Activated CD4-positive, alpha-beta T cell treated with anti-CD3 and anti-CD28 coated beads for 36 hours (primary cell): ENCODE measurements at regions of chr2 and their contacts with region 1.

Region 1: DNA sequence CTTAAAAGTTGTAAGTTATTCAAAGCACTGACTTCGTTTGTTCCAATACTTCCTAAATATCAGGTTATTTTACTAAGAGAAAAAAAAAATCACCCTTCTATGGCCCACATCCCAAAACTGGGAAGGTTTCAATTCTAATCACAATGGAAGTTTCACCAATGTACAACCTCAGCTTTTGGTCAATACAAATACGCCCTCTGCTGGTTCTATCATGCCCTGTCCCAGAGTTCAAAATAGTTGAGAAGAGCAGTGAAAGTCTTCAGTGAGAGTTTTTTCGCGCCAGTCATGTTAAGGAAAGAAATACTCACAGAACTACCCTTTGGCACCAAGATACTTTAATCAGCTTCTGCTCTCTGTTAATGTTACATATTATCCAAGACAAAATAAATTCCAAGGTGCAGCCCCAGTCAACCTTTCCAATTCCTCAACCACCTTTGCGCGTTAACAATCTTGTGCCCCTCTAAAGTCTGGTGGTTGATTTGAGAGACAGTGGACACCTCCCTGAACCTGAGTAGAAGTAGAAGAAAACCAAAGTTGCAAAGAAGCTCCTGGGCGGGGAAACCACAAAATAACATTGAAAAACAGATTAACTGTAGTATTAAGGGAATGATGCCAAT is 59.9 kb downstream of the SUMO1 start:
- DNase-seq: peak; percentile 71
- ATAC-seq: peak; percentile 84
- H3K4me3 Mint-ChIP-seq: no peak overlapping the region
- H3K27ac Mint-ChIP-seq: no peak overlapping the region
- H3K4me1 Mint-ChIP-seq: peaks cover 2% of the 10 kb centered on the region
- H3K27me3 Mint-ChIP-seq: peaks cover 3% of the 10 kb centered on the region

Region 2: DNA sequence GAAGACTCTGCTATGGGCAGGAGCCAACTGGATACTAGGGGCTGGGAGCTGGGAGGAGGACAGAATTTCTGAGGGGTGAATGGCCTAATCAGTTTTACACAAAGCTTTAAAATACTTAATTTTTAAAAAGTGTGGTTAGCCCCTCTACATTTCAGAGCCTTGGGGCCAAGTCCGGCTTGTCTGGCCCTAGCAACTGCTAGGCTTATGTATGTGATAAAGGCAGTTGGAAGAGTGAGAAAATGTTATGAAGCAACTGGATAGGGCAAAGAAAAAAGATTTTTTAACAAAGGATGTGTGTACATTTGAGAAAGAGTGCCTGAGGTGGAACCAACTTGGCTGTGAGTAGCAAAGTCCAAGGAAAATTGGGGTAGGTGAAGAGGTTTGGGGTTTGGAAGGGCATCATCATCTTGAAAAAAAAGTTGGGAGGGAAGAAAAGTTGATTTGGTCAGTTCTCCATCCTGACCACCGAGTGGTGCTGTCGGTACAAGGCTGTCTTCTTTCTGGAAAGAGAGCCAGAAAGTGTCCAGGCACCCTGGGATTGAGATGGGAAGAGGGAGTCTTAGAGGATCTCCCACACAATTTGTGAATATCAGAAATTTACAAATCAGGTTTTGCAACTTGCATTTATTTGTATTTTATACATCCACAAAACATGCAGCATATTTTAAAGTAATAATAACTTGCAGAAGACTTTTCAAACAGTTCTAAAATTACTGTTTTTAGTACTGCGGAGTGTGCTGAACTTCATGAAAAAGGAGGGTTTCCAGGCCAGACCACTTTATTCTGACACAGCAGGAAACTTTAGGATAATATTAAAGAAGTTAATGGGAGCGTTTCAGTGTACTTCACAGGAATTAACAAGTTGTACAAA is 382.6 kb before region 1 on chr2:
- CTCF ChIA-PET with region 1: no interaction called
- POLR2A ChIA-PET with region 1: no interaction called
- intact Hi-C with region 1: loop called (anchors 2 to 5 kb)
- DNase-seq: peak; percentile 19
- ATAC-seq: no peak
- H3K4me3 Mint-ChIP-seq: no peak overlapping the region
- H3K27ac Mint-ChIP-seq: no peak overlapping the region
- H3K4me1 Mint-ChIP-seq: no peaks in the 10 kb centered on the region
- H3K27me3 Mint-ChIP-seq: peaks cover 2% of the 10 kb centered on the region

Region 3: GRCh38 chr2:201860636-201861066 is 317.8 kb before region 1 on chr2:
- CTCF ChIA-PET with region 1: interaction called, 45 read pairs
- POLR2A ChIA-PET with region 1: no interaction called
- intact Hi-C with region 1: loop called (anchors 1 kb)
- DNase-seq: peak; percentile 57
- ATAC-seq: peak; percentile 82
- H3K4me3 Mint-ChIP-seq: no peak overlapping the region
- H3K27ac Mint-ChIP-seq: no peak overlapping the region
- H3K4me1 Mint-ChIP-seq: peaks cover 16% of the 10 kb centered on the region
- H3K27me3 Mint-ChIP-seq: peaks cover 15% of the 10 kb centered on the region

Region 4: DNA sequence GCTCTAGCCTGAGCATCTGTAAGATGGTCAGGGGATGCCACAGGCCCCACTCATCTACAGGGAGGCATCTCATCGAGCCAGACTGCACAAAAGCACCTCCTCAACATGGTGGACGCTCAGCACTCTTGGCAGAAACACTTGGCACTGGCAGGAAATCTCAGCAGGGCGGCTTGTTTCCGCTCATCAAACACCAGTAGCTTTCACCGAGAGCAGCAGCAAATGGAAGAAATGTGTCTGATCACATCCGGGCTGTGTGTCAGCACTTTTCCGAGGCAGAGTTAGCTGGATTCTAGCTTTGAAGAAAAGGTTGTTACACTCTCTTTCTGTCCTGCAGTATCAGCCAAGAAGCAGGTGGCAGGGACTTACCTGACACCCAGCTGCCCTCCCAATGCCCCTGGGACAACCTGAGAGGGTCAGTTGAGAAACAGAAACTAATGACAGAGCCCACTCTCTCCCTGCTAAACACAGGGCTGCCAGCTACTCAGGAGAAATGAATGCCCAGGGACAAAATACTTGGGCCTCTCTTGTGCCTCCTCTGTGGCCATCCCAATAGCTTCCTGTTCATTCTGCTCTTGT is 213.7 kb before region 1 on chr2:
- CTCF ChIA-PET with region 1: interaction called, 3 read pairs
- POLR2A ChIA-PET with region 1: no interaction called
- intact Hi-C with region 1: loop called in 1 of 2 experiments (anchors 1 kb)
- DNase-seq: peak; percentile 51
- ATAC-seq: peak; percentile 85
- H3K4me3 Mint-ChIP-seq: no peak overlapping the region
- H3K27ac Mint-ChIP-seq: peak overlapping the region; percentile 79
- H3K4me1 Mint-ChIP-seq: no peaks in the 10 kb centered on the region
- H3K27me3 Mint-ChIP-seq: no peaks in the 10 kb centered on the region

Region 5: DNA sequence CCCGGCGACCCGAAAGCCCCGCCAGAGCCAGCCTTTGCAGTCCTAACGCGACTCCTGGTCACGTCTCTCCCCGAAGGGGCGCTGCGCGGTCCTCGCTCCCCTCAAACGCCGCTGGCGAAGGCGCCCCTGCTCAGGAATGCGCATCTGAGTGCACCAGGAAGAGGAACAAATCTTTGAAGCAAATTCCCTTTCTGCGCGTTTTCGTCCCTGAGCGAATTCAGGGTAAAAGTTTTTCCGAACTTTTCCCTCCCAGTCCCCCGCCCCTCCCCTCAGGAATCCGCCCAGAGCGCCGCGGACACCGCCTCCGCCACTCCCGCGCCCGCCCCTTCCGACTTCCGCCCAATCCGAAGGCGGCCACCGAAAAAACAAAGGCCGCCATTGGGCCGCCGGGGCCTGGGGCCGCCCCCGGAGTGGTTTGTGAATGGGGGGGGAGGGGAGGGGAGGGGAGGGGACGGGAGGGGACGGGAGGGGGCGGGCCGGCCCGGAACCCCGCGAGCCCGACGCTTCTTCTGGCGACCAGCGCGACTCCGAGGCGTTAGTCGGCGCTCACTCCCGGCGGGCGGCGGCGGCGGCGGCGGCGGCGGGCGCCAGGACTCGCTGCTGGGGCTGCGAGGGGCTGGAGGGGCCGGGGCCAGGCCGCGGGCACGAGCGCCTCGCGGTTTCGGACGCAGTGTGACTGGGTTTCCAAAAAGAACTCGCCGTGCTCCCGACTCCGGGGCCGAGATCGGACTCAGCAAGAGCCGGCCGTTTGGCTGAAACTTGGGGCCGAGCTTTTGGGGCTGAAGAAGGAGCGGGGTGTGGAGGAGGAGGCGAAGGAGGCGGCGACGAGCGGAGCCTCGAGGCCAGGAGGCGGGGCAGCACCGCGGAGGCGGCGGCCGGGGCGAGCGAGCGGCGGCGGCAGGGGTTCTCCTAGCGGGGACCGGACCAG is 144.9 kb before region 1 on chr2 and contains the start of gene FZD7:
- CTCF ChIA-PET with region 1: no interaction called
- POLR2A ChIA-PET with region 1: no interaction called
- intact Hi-C with region 1: loop called (anchors 1 to 2 kb)
- DNase-seq: peak; percentile 91
- ATAC-seq: peak; percentile 83
- H3K4me3 Mint-ChIP-seq: peak within 1 kb of the TSS; percentile 72
- H3K27ac Mint-ChIP-seq: peak within 1 kb of the TSS; percentile 22
- H3K4me1 Mint-ChIP-seq: peaks cover 13% of the 10 kb centered on the region
- H3K27me3 Mint-ChIP-seq: peaks cover 21% of the 10 kb centered on the region
- total RNA-seq, gene FZD7: 0.58 to 0.94 TPM

Region 6: DNA sequence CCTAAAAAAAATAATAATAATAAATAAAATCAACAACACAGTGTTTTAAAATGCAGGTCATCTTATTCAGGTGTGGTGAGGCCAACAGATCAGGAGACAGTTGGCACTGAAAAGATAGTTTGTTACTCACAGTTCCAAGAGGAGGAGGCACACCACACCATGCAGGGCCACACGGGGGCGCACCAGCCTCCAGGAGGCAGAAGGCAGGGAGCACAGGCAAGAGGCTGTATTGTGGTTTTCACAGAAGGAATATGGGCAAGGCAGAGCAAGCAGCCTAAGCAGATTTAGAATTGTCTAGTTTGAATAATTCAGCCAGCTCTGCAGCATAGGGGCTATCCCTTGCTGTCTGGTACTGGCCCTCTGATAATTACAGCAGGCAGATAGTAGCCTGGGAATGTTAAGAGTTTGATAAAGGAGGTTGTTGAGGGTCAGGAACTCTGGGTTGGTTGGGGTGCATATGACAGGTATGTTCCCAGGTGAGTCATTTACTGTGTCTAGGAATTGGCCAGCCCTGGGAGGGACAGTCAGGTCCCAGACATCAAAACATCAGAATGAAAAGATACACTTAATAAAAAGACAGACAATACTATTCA is 74.1 kb before region 1 on chr2:
- CTCF ChIA-PET with region 1: interaction called, 9 read pairs
- POLR2A ChIA-PET with region 1: no interaction called
- intact Hi-C with region 1: loop called (anchors 1 kb)
- DNase-seq: peak; percentile 80
- ATAC-seq: peak; percentile 71
- H3K4me3 Mint-ChIP-seq: no peak overlapping the region
- H3K27ac Mint-ChIP-seq: no peak overlapping the region
- H3K4me1 Mint-ChIP-seq: no peaks in the 10 kb centered on the region
- H3K27me3 Mint-ChIP-seq: peaks cover 7% of the 10 kb centered on the region

Region 7: DNA sequence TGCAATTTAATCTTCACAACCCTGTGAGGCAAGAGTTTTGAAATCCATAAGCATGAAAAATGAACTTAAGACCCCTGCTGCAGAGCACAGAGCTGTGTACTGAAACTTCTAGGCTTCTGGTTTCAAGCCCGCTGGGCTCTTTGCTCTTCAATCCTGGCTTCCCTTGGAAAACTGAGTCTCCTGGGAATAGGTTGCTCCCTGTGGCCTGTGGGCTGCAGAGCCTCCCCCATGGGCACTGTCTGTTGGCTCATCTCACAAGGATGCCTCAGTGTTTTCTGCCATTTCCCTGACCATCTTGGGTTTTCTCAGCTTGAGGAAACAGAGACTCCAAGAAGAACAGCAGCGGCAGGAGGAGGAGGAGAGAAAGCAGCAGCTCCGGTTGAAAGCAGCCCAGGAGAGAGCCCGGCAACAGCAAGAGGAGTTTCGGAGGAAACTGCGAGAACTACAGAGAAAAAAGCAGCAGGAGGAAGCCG is 15.5 kb after region 1 on chr2:
- CTCF ChIA-PET with region 1: interaction called, 23 read pairs
- POLR2A ChIA-PET with region 1: no interaction called
- intact Hi-C with region 1: no loop called
- DNase-seq: no peak
- ATAC-seq: no peak
- H3K4me3 Mint-ChIP-seq: no peak overlapping the region
- H3K27ac Mint-ChIP-seq: no peak overlapping the region
- H3K4me1 Mint-ChIP-seq: no peaks in the 10 kb centered on the region
- H3K27me3 Mint-ChIP-seq: no peaks in the 10 kb centered on the region

Region 8: DNA sequence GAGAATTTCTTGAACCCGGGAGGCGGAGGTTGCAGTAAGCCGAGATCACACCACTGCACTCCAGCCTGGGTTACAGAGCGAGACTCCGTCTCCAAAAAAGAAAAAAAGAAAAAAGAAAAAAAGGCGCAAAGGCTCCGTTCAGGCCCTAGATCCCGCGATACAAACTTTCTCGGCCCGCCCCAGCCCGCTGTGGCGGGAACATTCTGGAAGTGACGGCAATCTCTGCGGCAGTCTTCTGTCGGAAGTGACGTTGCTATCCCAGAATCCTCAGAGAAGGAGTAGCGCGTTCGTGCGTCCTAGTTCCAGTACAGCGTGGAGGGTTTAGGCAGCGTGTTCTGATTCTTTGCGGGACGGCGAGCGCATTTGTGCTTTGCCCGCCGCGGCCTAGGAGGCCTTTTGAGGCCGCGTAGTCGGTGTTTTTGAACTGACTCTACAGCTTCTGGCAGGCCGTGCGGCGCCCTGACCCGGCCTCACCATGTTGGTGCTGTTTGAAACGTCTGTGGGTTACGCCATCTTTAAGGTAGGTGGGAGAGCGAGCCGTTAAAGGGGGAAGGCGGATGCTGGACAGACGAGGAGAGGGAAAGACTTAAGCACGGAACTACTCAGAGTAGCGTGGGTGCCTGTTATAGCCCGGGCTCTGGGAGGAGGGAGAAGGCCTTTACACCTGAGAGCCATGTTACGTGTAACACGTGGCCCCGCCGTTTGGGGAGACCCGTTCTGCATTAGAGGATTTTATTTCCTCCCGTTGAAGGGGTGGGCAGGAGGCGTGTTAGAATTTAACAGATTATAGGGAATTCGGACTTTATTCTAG is 87.2 kb after region 1 on chr2 and contains the start of gene NOP58:
- CTCF ChIA-PET with region 1: no interaction called
- POLR2A ChIA-PET with region 1: no interaction called
- intact Hi-C with region 1: no loop called
- DNase-seq: peak; percentile 95
- ATAC-seq: peak; percentile 84
- H3K4me3 Mint-ChIP-seq: no peak within 1 kb of the TSS
- H3K27ac Mint-ChIP-seq: peak within 1 kb of the TSS; percentile 78
- H3K4me1 Mint-ChIP-seq: peaks cover 15% of the 10 kb centered on the region
- H3K27me3 Mint-ChIP-seq: no peaks in the 10 kb centered on the region
- total RNA-seq, gene NOP58: 160 to 180 TPM

Region 9: DNA sequence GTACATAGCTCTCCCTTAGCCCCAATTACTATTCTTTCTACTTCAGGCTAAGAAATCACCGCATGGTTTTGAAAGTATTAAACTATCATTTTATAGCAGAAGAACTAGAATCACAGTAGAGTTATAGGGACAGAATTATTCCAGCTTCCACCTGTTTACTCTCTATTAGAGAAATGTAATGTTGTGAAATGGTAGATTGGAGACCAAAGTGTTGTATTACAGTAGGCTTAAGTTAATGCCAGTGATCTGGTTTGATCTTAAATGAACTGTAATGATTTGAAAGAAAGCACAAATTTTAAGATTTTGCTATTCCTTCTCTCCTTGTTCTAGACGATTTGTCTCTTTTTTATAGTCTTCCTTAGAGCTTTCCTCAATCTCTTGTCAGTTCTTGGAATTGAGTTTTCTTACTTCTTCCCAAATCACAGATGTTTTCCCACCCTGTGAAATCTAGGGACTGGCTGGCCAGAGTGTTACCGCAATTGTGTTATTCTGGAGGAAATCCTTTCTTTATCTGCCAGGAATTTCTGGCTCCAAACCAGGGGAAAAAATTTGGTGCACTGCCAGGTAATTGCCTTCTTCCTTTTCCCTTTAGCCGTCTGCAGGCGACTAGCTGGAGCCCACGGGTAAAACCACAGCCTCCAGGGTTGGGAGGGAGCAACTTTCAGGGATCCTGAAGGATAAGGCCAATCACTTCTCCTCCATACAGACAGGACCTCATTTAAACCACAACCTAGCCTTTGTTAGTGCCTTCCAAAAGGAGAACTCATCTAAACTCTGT is 138.8 kb after region 1 on chr2:
- CTCF ChIA-PET with region 1: no interaction called
- POLR2A ChIA-PET with region 1: no interaction called
- intact Hi-C with region 1: no loop called
- DNase-seq: no peak
- ATAC-seq: no peak
- H3K4me3 Mint-ChIP-seq: no peak overlapping the region
- H3K27ac Mint-ChIP-seq: no peak overlapping the region
- H3K4me1 Mint-ChIP-seq: no peaks in the 10 kb centered on the region
- H3K27me3 Mint-ChIP-seq: no peaks in the 10 kb centered on the region

Region 10: DNA sequence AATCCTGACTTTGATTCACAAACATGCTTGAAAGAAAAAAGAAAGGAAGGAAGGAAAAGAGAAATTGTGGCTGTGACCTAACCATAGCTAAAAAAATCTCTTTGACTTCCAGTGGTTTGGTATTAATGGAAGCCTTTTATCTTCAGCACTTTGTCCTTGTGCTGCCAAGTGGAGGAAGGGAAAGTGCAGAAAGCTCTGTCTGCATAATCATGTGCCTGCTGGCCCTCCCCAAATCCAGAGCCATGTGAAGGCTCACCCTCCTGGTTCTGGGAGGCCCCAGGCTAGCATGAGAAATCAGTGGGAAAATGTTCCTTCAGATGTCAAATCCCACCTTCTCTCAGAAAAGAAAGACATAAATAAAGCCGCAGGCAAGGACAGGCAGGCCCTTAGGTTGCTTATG is 149.4 kb after region 1 on chr2:
- CTCF ChIA-PET with region 1: no interaction called
- POLR2A ChIA-PET with region 1: no interaction called
- intact Hi-C with region 1: no loop called
- DNase-seq: no peak
- ATAC-seq: no peak
- H3K4me3 Mint-ChIP-seq: no peak overlapping the region
- H3K27ac Mint-ChIP-seq: no peak overlapping the region
- H3K4me1 Mint-ChIP-seq: no peaks in the 10 kb centered on the region
- H3K27me3 Mint-ChIP-seq: no peaks in the 10 kb centered on the region

Region 11: GRCh38 chr2:202355993-202356505 is 177.6 kb after region 1 on chr2:
- CTCF ChIA-PET with region 1: no interaction called
- POLR2A ChIA-PET with region 1: no interaction called
- intact Hi-C with region 1: no loop called
- DNase-seq: no peak
- ATAC-seq: no peak
- H3K4me3 Mint-ChIP-seq: no peak overlapping the region
- H3K27ac Mint-ChIP-seq: no peak overlapping the region
- H3K4me1 Mint-ChIP-seq: no peaks in the 10 kb centered on the region
- H3K27me3 Mint-ChIP-seq: no peaks in the 10 kb centered on the region